PC-9 (cell line): ENCODE measurements at regions of chr3 and their contacts with region 1.

Region 1: GRCh38 chr3:167750272-167750971 is 14.9 kb downstream of the SERPINI1 start:
- DNase-seq: no peak
- H3K4me3 ChIP-seq: no peak overlapping the region
- H3K27ac ChIP-seq: no peak overlapping the region
- H3K4me1 ChIP-seq: no peaks in the 10 kb centered on the region
- H3K27me3 ChIP-seq: no peaks in the 10 kb centered on the region
- CTCF ChIP-seq: no peak

Region 2: GRCh38 chr3:167241048-167241845 is 509.2 kb before region 1 on chr3:
- CTCF ChIA-PET with region 1: no interaction called
- POLR2A ChIA-PET with region 1: no interaction called
- intact Hi-C with region 1: no loop called
- DNase-seq: no peak
- H3K4me3 ChIP-seq: no peak overlapping the region
- H3K27ac ChIP-seq: no peak overlapping the region
- H3K4me1 ChIP-seq: no peaks in the 10 kb centered on the region
- H3K27me3 ChIP-seq: no peaks in the 10 kb centered on the region
- CTCF ChIP-seq: no peak

Region 3: GRCh38 chr3:167684388-167684993 is 65.9 kb before region 1 on chr3:
- CTCF ChIA-PET with region 1: interaction called, 16 read pairs
- POLR2A ChIA-PET with region 1: no interaction called
- intact Hi-C with region 1: no loop called
- DNase-seq: peak; percentile 27 to 57
- H3K4me3 ChIP-seq: no peak overlapping the region
- H3K27ac ChIP-seq: no peak overlapping the region
- H3K4me1 ChIP-seq: no peaks in the 10 kb centered on the region
- H3K27me3 ChIP-seq: no peaks in the 10 kb centered on the region
- CTCF ChIP-seq: peak; percentile 95